ENCODE measurements at regions of chr13 and their contacts with region 1.

Region 1: DNA sequence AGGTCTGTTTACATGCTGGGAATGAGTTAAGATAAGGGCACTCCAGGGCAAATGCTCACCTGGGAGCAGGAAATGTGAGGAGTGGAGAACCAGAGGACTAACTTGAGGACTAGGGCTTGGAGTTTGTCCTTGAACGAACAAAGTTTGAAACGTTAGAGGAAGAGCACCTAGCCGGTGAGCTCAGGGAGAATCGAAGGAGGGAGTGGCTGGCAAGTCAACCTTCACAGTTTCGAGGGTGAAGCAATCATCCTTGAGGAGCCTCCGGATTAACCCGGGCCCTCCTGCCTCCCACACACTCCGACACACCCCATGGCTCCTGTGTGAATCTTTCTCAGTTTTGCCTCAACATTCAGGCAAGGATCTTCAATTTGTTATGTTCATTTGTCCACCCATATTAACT is 58.6 kb downstream of the LMO7 start:
- DNase-seq: no peak
- ATAC-seq: no peak
- H3K4me3 ChIP-seq: no peak overlapping the region
- H3K27ac ChIP-seq: peak overlapping the region in 1 of 2 experiments; percentile 35; a peak in 1 of 6 replicates
- H3K4me1 ChIP-seq: peaks cover 27% of the 10 kb centered on the region
- CTCF ChIP-seq: no peak
- EP300 ChIP-seq: no peak
- POLR2A ChIP-seq: no peak
- RAD21 ChIP-seq: no peak

Region 2: DNA sequence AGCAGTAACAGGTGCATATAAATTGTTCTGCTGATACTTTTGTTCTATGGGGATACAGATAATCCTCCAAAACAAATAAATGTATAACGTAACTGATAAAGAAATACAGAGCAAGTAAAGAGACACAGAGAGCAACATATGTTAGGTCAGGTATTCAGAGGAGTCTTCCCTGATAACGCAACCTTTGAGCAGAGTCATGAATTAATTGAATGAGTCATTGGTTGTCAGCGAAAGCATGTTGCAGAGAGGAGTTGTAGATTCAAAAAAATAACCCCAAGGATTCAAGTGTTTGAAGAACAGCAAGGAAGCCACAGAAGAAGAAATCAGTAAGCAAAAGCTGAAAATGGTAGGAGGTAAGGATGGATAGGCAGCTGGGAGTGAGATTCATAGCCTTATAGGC is 457.9 kb before region 1 on chr13:
- CTCF ChIA-PET with region 1: no interaction called
- POLR2A ChIA-PET with region 1: no interaction called
- DNase-seq: no peak
- ATAC-seq: no peak
- H3K4me3 ChIP-seq: no peak overlapping the region
- H3K27ac ChIP-seq: no peak overlapping the region
- H3K4me1 ChIP-seq: no peaks in the 10 kb centered on the region
- CTCF ChIP-seq: no peak
- EP300 ChIP-seq: no peak
- POLR2A ChIP-seq: no peak
- RAD21 ChIP-seq: no peak

Region 3: DNA sequence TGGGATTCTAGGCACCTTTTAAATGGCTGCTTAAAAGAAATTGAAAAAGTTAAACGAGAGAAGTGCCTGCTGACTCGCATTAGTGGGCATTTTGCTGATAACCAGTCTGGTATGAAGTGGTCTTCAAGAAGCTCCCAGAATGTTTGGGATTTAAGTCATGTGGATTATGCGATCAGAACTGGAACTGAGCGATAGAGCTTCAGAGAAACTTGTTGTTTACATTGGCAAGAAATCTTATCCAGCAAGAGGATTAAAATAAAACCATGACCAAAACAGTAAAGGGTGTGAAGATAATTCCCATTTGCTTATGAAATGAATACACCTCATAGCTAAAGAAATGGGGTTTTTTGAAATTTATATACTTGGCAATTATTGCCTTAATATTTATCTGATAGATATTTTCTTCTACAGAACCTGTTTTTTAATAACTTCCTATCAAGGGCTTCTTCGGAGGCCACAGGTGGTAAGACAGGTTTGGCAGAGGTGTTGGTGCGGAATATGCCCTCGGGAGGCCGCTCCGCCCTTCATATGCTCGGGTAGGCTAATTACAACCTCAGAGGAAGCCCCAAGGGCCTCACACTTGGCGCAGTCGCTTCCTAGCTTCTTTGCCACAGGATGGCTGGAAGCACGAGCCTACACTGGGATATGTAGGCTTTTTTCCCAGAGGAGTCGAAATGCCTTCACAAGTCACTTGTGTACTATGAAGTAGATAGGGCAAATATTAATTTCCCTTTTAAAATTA is 10.0 kb after region 1 on chr13:
- CTCF ChIA-PET with region 1: interaction called, 51 read pairs
- POLR2A ChIA-PET with region 1: no interaction called
- DNase-seq: peak in 1 of 2 experiments; percentile 64
- ATAC-seq: peak; percentile 87 to 90
- H3K4me3 ChIP-seq: no peak overlapping the region
- H3K27ac ChIP-seq: peak overlapping the region; percentile 74 to 85
- H3K4me1 ChIP-seq: peaks cover 26% of the 10 kb centered on the region
- CTCF ChIP-seq: no peak
- EP300 ChIP-seq: no peak
- POLR2A ChIP-seq: no peak
- RAD21 ChIP-seq: no peak

Region 4: GRCh38 chr13:75760131-75761021 is 65.7 kb after region 1 on chr13:
- CTCF ChIA-PET with region 1: interaction called, 16 read pairs
- POLR2A ChIA-PET with region 1: no interaction called
- DNase-seq: peak; percentile 50 to 75
- ATAC-seq: peak; percentile 92 to 96
- H3K4me3 ChIP-seq: peak overlapping the region; percentile 48
- H3K27ac ChIP-seq: peak overlapping the region; percentile 80 to 83
- H3K4me1 ChIP-seq: peaks cover 30% of the 10 kb centered on the region
- CTCF ChIP-seq: no peak
- EP300 ChIP-seq: no peak
- POLR2A ChIP-seq: no peak
- RAD21 ChIP-seq: peak in 1 of 2 experiments; percentile 25; a peak in 2 of 5 replicates

Region 5: GRCh38 chr13:75798353-75799255 is 103.9 kb after region 1 on chr13:
- CTCF ChIA-PET with region 1: interaction called, 27 read pairs
- POLR2A ChIA-PET with region 1: no interaction called
- DNase-seq: peak in 1 of 2 experiments; percentile 24
- ATAC-seq: peak in 1 of 2 experiments; percentile 66; a peak in 2 of 6 replicates
- H3K4me3 ChIP-seq: no peak overlapping the region
- H3K27ac ChIP-seq: peak overlapping the region in 1 of 2 experiments; percentile 61; a peak in 3 of 6 replicates
- H3K4me1 ChIP-seq: peaks cover 41% of the 10 kb centered on the region
- CTCF ChIP-seq: no peak
- EP300 ChIP-seq: no peak
- POLR2A ChIP-seq: no peak
- RAD21 ChIP-seq: no peak

Region 6: GRCh38 chr13:75870397-75870903 is 175.7 kb after region 1 on chr13:
- CTCF ChIA-PET with region 1: interaction called, 42 read pairs
- POLR2A ChIA-PET with region 1: no interaction called
- DNase-seq: peak; percentile 14 to 15
- ATAC-seq: peak in 1 of 2 experiments; percentile 42; a peak in 2 of 6 replicates
- H3K4me3 ChIP-seq: peak overlapping the region; percentile 41
- H3K27ac ChIP-seq: peak overlapping the region; percentile 23 to 80; a peak in 5 of 6 replicates
- H3K4me1 ChIP-seq: peaks cover under 1% of the 10 kb centered on the region; the same call in 1 of the 3 replicates
- CTCF ChIP-seq: peak; percentile 73
- EP300 ChIP-seq: no peak
- POLR2A ChIP-seq: no peak
- RAD21 ChIP-seq: peak; percentile 70 to 79

Measured in A549 (cell line).